AG04449 (cell line): ENCODE measurements at regions of chr10 and their contacts with region 1.

Region 1: GRCh38 chr10:121823993-121824463 is 103.8 kb downstream of the ATE1 start:
- DNase-seq: no peak
- H3K4me3 ChIP-seq: no peak overlapping the region
- CTCF ChIP-seq: peak; percentile 42

Region 2: GRCh38 chr10:121804460-121804859 is 19.6 kb before region 1 on chr10:
- CTCF ChIA-PET with region 1: interaction called, 27 read pairs
- POLR2A ChIA-PET with region 1: interaction called, 3 read pairs
- DNase-seq: peak; percentile 62
- H3K4me3 ChIP-seq: no peak overlapping the region
- CTCF ChIP-seq: no peak

Region 3: GRCh38 chr10:121813211-121813815 is 10.7 kb before region 1 on chr10:
- CTCF ChIA-PET with region 1: interaction called, 18 read pairs
- POLR2A ChIA-PET with region 1: interaction called, 3 read pairs
- DNase-seq: no peak
- H3K4me3 ChIP-seq: no peak overlapping the region
- CTCF ChIP-seq: no peak

Region 4: GRCh38 chr10:121841862-121842261 is 17.8 kb after region 1 on chr10:
- CTCF ChIA-PET with region 1: interaction called, 64 read pairs
- POLR2A ChIA-PET with region 1: no interaction called
- DNase-seq: no peak
- H3K4me3 ChIP-seq: no peak overlapping the region
- CTCF ChIP-seq: no peak

Region 5: DNA sequence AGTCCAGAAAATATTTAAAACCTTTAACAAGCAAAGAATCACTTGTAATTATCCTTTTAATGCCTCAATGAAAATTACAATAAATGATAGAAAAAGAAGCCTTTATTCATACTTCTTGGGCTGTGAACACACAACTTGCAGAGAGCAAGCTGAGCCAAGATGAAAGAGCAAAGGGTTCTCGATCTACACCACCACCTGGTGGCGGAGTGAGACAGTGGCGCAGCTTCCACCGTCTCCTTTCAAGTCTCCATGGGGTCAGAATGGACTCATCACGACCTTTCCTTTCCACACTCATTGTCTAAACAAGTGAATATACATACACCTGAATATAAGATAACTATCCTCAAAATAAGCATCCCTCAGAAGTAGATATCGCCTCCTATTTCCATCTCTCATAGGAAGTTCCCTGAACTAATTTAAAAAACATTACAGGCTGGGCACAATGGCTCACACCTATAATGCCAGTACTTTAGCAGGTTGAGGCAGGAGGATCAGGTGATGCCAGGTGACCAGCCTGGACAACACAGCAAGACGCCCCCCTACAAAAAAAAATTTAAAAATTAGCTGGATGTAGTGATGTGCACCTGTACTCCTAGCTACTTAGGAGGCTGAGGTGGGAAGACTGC is 63.1 kb after region 1 on chr10:
- CTCF ChIA-PET with region 1: interaction called, 11 read pairs
- POLR2A ChIA-PET with region 1: no interaction called
- DNase-seq: peak; percentile 24
- H3K4me3 ChIP-seq: no peak overlapping the region
- CTCF ChIP-seq: peak; percentile 88